SK-N-SH (cell line): ENCODE measurements at regions of chr2 and their contacts with region 1.

Region 1: DNA sequence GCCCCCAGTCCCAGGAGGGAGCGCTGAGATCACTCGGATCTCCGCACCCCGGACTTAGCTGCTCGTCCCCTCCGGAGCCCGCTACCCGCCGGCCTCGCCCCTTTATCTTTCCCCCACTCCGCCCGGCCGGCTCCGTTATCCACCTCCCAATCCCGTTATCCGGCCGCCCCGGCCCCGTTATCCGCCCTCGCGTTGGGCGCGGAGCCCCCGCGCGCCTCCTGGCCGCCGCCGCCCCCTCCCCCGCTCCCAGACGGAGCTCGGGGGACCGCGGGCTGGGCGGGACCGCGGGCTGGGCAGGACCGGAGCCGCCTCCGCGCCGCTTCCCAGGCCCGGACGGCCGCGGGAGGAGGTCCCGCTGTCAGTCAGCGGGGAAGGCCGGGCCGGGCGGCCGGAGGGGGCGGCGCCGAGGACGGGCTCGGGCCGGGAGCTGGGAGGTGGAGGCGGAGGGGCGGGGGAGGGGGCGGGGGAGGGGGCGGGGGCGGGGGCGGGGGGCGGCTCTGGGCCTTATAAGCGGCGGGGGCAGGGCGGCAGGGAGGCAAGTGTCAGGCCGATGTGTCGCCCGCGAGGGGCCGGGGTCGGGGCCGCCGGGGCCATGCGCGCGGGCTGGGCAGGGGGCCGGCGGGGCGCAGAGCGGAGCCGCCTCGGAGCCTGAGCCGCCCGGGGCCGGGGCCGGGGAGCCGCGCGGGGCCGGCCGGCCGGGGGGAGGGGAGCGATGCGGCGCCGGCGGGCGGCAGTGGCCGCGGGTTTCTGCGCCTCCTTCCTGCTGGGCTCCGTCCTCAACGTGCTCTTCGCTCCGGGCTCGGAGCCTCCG is at the start of gene PKDCC:
- DNase-seq: peak; percentile 100
- H3K4me3 ChIP-seq: peak within 1 kb of the TSS; percentile 81 to 85
- H3K27ac ChIP-seq: peak within 1 kb of the TSS; percentile 5 to 100; a peak in 3 of 4 replicates
- H3K4me1 ChIP-seq: peaks cover 0 to 67% of the 10 kb centered on the region in 2 experiments; a peak in 2 of 4 replicates
- H3K27me3 ChIP-seq: 0 out of 2 replicates have a peak, but pooled peaks cover 8% of the 10 kb centered on the region
- CTCF ChIP-seq: no peak
- EP300 ChIP-seq: no peak
- RAD21 ChIP-seq: no peak
- polyA plus RNA-seq, gene PKDCC: 16.0 and 19.5 TPM in 2 replicates

Region 2: DNA sequence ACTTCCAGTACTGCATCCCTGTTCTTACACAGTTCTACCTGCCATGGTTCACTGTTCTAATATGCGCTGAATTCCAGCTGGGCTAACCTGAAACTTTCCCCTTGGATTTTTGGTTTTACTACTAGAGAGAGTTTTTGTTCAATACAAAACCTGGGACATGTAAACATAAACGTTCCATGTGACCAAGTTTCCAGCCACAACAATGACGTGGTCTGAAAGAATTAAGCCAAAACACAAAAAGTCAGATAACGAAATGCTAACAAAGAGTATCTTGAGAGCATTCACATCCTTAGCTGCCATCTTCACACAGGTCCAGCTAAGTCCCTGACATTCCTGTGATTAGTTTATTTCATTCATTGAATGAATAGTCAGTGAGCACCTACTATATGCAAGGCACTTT is 466.9 kb before region 1 on chr2:
- CTCF ChIA-PET with region 1: no interaction called
- POLR2A ChIA-PET with region 1: no interaction called
- DNase-seq: no peak
- H3K4me3 ChIP-seq: no peak overlapping the region
- H3K27ac ChIP-seq: no peak overlapping the region
- H3K4me1 ChIP-seq: peaks cover 0 to 2% of the 10 kb centered on the region in 2 experiments; a peak in 1 of 4 replicates
- H3K27me3 ChIP-seq: no peaks in the 10 kb centered on the region
- CTCF ChIP-seq: no peak
- EP300 ChIP-seq: no peak
- RAD21 ChIP-seq: no peak

Region 3: DNA sequence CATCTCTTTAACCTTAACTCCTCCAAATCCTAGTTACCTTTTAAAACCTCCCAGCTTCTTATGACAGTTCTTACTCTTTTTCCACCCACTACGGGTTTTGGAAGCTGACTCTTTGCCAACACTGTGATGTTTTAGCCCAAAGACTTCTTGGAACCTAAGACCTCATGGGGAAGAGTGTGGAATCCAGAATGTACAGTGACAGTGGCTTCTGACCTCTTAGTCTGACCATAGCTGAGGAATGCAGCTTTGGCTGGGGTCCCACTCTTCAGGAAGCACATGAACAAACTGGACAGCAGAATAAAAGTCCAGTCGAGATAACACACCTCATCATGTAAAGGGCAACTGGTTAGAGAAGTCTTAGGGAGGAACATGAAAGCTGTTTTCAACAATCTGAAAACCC is 160.9 kb before region 1 on chr2:
- CTCF ChIA-PET with region 1: interaction called, 8 read pairs
- POLR2A ChIA-PET with region 1: interaction called, 25 read pairs
- DNase-seq: no peak
- H3K4me3 ChIP-seq: no peak overlapping the region
- H3K27ac ChIP-seq: peak overlapping the region in 1 of 2 experiments; percentile 100; a peak in 2 of 4 replicates
- H3K4me1 ChIP-seq: peaks cover 0 to 23% of the 10 kb centered on the region in 2 experiments; a peak in 2 of 4 replicates
- H3K27me3 ChIP-seq: peaks cover 5% of the 10 kb centered on the region; the same call in 1 of the 2 replicates
- CTCF ChIP-seq: no peak
- EP300 ChIP-seq: no peak
- RAD21 ChIP-seq: no peak

Region 4: DNA sequence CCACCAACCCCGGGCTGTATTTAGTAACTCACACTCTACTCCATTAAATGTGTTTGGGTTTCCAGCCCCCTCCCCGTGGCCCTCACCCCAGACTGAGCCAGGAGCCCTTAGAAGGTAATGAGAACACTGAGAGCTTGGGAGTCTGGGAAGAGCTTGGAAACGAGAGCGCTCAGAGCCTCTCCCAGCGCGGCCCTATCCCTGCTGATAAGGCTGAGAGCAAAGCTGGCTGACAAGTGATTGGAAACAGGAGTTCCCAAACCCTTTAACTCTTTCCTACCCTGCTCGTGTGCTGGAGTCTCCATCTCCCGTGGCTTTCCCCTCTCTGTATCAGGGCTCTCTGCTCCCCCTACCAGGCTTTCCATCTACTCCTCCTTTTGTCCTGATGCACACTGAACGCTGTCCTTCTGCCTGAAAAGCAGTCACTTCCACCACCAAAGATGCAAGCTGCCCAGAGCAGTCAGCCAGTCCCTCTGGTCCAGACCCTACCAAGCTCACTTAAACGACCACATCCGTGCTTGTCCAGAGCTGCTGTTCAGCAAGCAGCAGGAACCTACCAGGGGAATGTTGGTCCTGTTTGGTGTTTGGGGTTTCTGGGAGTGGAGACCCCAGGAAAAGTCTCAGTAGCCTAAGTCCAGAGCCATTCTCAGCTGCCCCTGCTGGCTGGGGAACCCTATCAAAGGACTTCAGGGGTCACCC is 99.8 kb before region 1 on chr2:
- CTCF ChIA-PET with region 1: interaction called, 16 read pairs
- POLR2A ChIA-PET with region 1: interaction called, 93 read pairs
- DNase-seq: peak; percentile 81
- H3K4me3 ChIP-seq: no peak overlapping the region; a peak in 1 of 4 replicates
- H3K27ac ChIP-seq: peak overlapping the region in 1 of 2 experiments; percentile 95; a peak in 2 of 4 replicates
- H3K4me1 ChIP-seq: peaks cover 0 to 52% of the 10 kb centered on the region in 2 experiments; a peak in 3 of 4 replicates
- H3K27me3 ChIP-seq: peaks cover 15% of the 10 kb centered on the region
- CTCF ChIP-seq: no peak
- EP300 ChIP-seq: peak in 1 of 2 experiments; percentile 89; a peak in 2 of 4 replicates
- RAD21 ChIP-seq: peak; percentile 45

Region 5: DNA sequence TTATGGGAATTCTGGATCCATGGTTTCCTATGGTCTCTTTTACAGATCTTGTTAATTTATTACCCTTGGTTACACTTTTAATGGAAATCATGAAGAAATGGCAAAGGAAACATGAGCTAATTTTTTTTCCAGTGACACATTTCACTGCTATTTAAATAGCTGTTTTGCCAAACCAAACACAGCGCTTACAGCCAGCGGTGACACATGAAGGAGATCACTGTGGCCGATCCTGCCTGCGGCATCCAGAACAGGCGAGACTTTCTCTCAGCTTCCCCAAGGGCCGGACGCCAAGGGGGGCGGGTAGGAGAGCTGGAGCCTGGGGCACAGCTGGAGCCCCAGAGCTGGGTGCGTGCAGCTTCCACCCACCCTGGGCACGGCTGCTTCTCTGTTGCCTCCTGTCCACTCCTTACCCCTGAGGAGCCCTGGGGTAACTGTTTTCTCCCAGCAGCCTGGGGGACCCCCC is 81.2 kb before region 1 on chr2:
- CTCF ChIA-PET with region 1: interaction called, 4 read pairs
- POLR2A ChIA-PET with region 1: interaction called, 19 read pairs
- DNase-seq: no peak
- H3K4me3 ChIP-seq: no peak overlapping the region
- H3K27ac ChIP-seq: peak overlapping the region in 1 of 2 experiments; percentile 56; a peak in 1 of 4 replicates
- H3K4me1 ChIP-seq: peaks cover 23 to 52% of the 10 kb centered on the region in 2 experiments
- H3K27me3 ChIP-seq: no peaks in the 10 kb centered on the region
- CTCF ChIP-seq: no peak
- EP300 ChIP-seq: no peak
- RAD21 ChIP-seq: no peak

Region 6: DNA sequence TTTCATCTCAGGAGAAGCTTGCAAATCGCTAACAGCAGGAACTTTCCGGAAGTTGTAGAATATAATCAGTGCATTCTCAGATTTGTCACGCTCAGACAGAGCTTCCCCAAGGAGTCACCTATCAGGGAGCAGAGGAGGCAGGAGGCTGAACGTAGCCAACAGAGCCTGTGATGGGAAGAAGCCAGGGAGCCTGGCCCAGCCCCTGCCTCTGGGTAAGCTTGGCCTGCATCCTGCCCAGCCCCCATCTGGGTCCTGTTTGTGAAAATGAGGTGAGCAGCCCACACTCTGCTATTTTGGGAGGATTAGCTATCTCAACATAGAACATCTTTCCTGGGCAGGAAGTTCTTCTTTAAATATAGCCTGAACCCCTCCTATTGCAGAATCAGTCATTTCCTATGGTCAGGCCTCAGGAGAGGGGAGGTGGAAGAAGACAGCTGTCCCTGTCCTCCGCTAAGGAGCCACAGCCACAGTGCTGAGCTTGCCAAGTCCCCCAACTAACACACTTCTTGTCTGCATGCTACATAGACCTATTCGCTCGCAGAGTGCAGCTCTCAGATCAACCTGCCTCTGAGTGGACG is 19.0 kb before region 1 on chr2:
- CTCF ChIA-PET with region 1: interaction called, 18 read pairs
- POLR2A ChIA-PET with region 1: interaction called, 26 read pairs
- DNase-seq: no peak
- H3K4me3 ChIP-seq: no peak overlapping the region
- H3K27ac ChIP-seq: no peak overlapping the region
- H3K4me1 ChIP-seq: peaks cover 30 to 32% of the 10 kb centered on the region in 2 experiments
- H3K27me3 ChIP-seq: no peaks in the 10 kb centered on the region
- CTCF ChIP-seq: no peak
- EP300 ChIP-seq: no peak
- RAD21 ChIP-seq: no peak